ENCODE measurements at regions of chr18 and their contacts with region 1.

Region 1: GRCh38 chr18:71238974-71239624 is 950.3 kb downstream of the SOCS6 start:
- DNase-seq: no peak
- ATAC-seq: no peak
- H3K4me3 ChIP-seq: no peak overlapping the region
- H3K4me3 Mint-ChIP-seq: no peak overlapping the region
- H3K27ac ChIP-seq: no peak overlapping the region
- H3K27ac Mint-ChIP-seq: no peak overlapping the region
- H3K4me1 ChIP-seq: no peaks in the 10 kb centered on the region
- H3K4me1 Mint-ChIP-seq: no peaks in the 10 kb centered on the region
- H3K27me3 ChIP-seq: no peaks in the 10 kb centered on the region
- H3K27me3 Mint-ChIP-seq: no peaks in the 10 kb centered on the region
- CTCF ChIP-seq: no peak

Region 2: GRCh38 chr18:71168557-71169145 is 70.4 kb before region 1 on chr18:
- CTCF ChIA-PET with region 1: no interaction called
- POLR2A ChIA-PET with region 1: no interaction called
- intact Hi-C with region 1: loop called (anchors 10 kb)
- DNase-seq: no peak
- ATAC-seq: no peak
- H3K4me3 ChIP-seq: no peak overlapping the region
- H3K4me3 Mint-ChIP-seq: no peak overlapping the region
- H3K27ac ChIP-seq: no peak overlapping the region
- H3K27ac Mint-ChIP-seq: no peak overlapping the region
- H3K4me1 ChIP-seq: no peaks in the 10 kb centered on the region
- H3K4me1 Mint-ChIP-seq: no peaks in the 10 kb centered on the region
- H3K27me3 ChIP-seq: no peaks in the 10 kb centered on the region
- H3K27me3 Mint-ChIP-seq: no peaks in the 10 kb centered on the region
- CTCF ChIP-seq: no peak